Pancreas (tissue), 10 donors: ENCODE measurements at regions of chr2 and their contacts with region 1.

Region 1: GRCh38 chr2:71923887-71924533 is 223.7 kb downstream of the CYP26B1 start:
- DNase-seq: peak in 4 of 6 donors; percentile 41 to 74 (median 60)
- ATAC-seq: peak; percentile 67 to 85 (median 82)
- H3K4me3 ChIP-seq: no peak overlapping the region
- H3K27ac ChIP-seq: no peak overlapping the region
- H3K4me1 ChIP-seq: no peaks in the 10 kb centered on the region
- H3K27me3 ChIP-seq: no peaks in the 10 kb centered on the region
- CTCF ChIP-seq: peak; percentile 75 to 83 (median 78)

Region 2: DNA sequence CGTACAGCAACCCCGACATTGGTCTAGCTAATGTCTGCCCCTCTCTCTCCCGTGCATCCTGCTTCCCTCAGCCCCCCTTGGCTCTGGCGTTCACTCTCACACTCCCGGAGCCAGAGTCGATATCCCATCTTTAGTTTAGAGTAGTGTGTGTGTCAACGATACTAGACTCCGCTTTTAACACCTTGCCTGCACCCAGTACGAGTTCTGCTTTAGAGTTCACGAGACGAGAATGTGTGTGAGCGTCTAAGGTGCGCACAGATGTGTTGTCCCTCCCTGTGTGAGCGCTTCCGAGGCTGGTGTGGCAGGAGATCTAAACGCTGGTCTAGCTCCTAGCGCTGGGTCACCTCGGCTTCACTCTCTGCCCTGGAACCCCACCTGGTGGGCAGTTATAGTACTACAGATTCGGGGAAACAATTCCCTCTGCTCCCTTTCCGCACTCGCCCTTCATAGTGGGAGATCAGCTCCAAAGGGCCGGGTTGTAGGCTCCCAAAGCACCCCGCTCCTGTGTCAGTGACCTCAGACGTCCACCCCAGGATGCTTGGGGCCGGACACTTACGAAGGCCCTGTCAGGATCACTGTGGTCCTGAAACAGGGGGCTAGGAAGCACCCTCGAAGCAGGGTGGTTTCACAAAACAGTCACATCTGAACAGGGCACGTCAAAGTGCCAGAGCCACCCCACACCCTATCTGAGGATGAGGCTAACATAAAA is 226.3 kb after region 1 on chr2:
- intact Hi-C with region 1: loop called in 2 of 3 experiments (anchors 5 to 10 kb)
- DNase-seq: peak; percentile 66 to 84 (median 77)
- ATAC-seq: peak; percentile 81 to 95 (median 92)
- H3K4me3 ChIP-seq: peak overlapping the region in 2 of 4 donors; percentile 41 to 49
- H3K27ac ChIP-seq: no peak overlapping the region
- H3K4me1 ChIP-seq: peaks cover 8 to 25% (median 12%) of the 10 kb centered on the region in 3 donors
- H3K27me3 ChIP-seq: peaks cover 0 to 16% (median 2%) of the 10 kb centered on the region in 4 donors
- CTCF ChIP-seq: peak; percentile 68 to 87 (median 76)

Region 3: GRCh38 chr2:72579591-72580180 is 655.7 kb after region 1 on chr2:
- intact Hi-C with region 1: loop called in 1 of 3 experiments (anchors 10 kb)
- DNase-seq: no peak
- ATAC-seq: peak in 3 of 4 donors; percentile 67 to 73 (median 73)
- H3K4me3 ChIP-seq: no peak overlapping the region
- H3K27ac ChIP-seq: no peak overlapping the region
- H3K4me1 ChIP-seq: peaks cover 0 to 3% (median 0%) of the 10 kb centered on the region in 3 donors
- H3K27me3 ChIP-seq: no peaks in the 10 kb centered on the region
- CTCF ChIP-seq: peak; percentile 15 to 52 (median 43)

Region 4: GRCh38 chr2:72745679-72746368 is 821.8 kb after region 1 on chr2:
- intact Hi-C with region 1: loop called in 1 of 3 experiments (anchors 10 kb)
- DNase-seq: no peak
- ATAC-seq: peak; percentile 56 to 89 (median 83)
- H3K4me3 ChIP-seq: no peak overlapping the region
- H3K27ac ChIP-seq: no peak overlapping the region
- H3K4me1 ChIP-seq: no peaks in the 10 kb centered on the region
- H3K27me3 ChIP-seq: no peaks in the 10 kb centered on the region
- CTCF ChIP-seq: peak in 3 of 4 donors; percentile 35 to 53 (median 42)

Region 5: GRCh38 chr2:73516033-73516432 is 1592.0 kb after region 1 on chr2:
- intact Hi-C with region 1: no loop called
- DNase-seq: no peak
- ATAC-seq: no peak
- H3K4me3 ChIP-seq: no peak overlapping the region
- H3K27ac ChIP-seq: no peak overlapping the region
- H3K4me1 ChIP-seq: no peaks in the 10 kb centered on the region
- H3K27me3 ChIP-seq: no peaks in the 10 kb centered on the region
- CTCF ChIP-seq: no peak